ENCODE measurements at regions of chr16 and their contacts with region 1.

Region 1: GRCh38 chr16:20383106-20384029 is 21.2 kb downstream of the PDILT start:
- DNase-seq: peak; percentile 65
- H3K4me3 ChIP-seq: no peak overlapping the region; a peak in 1 of 4 replicates
- H3K27ac ChIP-seq: no peak overlapping the region
- H3K4me1 ChIP-seq: no peaks in the 10 kb centered on the region; a peak in 1 of 4 replicates
- H3K27me3 ChIP-seq: no peaks in the 10 kb centered on the region
- CTCF ChIP-seq: peak; percentile 79
- EP300 ChIP-seq: no peak
- RAD21 ChIP-seq: peak; percentile 72

Region 2: DNA sequence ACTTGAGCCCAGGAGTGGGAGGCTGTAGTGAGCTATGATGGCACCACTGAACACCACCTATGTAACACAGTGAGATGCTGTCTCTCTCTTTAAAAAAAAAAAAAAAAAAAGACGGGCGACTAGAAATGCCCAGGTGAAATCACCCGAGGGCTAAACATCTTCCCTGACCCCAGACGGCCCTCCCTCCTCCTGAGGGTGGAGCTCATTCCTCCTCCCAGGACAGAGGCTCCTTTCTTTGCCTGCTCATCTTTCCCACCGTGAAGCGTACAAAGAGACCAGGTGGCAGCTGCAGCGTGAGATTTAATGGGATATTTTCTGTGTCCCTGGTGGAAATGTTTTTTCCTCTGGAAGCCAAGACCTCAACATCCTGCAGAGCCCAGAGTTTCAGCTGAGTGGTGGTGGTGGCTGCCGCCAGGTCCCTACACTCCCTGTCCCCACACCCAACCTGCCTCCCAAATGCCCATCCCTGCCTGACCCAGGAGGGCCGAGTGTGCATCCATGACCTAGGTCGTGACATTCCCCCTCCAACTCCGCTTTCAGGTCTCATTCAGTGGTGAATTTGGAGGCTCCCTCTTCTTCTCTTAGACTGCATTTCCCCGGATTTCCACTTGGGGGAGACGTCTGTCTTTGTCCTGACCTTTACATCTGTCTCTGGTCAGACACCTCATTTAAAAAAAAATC is 484.3 kb before region 1 on chr16:
- CTCF ChIA-PET with region 1: interaction called, 143 read pairs
- POLR2A ChIA-PET with region 1: no interaction called
- DNase-seq: peak; percentile 64
- H3K4me3 ChIP-seq: no peak overlapping the region; a peak in 1 of 4 replicates
- H3K27ac ChIP-seq: no peak overlapping the region
- H3K4me1 ChIP-seq: no peaks in the 10 kb centered on the region; a peak in 1 of 4 replicates
- H3K27me3 ChIP-seq: no peaks in the 10 kb centered on the region; the same call in 1 of the 2 replicates
- CTCF ChIP-seq: peak; percentile 76
- EP300 ChIP-seq: no peak
- RAD21 ChIP-seq: peak; percentile 80

Region 3: DNA sequence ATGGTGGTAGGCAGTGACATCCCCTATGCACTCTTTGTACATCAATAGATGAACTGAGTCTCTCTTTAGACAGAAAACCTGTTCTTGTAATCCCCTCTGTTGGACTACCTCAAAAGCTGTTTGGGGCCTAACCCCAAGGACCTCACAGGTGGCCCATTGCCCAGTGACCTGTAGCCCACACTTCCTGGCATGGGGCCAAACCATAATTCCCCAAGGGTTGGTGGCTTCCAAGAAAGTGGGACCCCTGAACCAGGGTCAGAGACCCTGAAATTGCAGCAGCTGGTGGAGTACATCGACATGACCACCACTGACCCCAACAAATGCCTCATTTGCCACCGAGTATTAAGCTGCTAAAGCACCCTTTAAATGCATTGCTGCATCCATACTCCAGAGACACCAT is 226.6 kb before region 1 on chr16:
- CTCF ChIA-PET with region 1: no interaction called
- POLR2A ChIA-PET with region 1: no interaction called
- DNase-seq: no peak
- H3K4me3 ChIP-seq: no peak overlapping the region
- H3K27ac ChIP-seq: no peak overlapping the region
- H3K4me1 ChIP-seq: no peaks in the 10 kb centered on the region
- H3K27me3 ChIP-seq: no peaks in the 10 kb centered on the region
- CTCF ChIP-seq: no peak
- EP300 ChIP-seq: no peak
- RAD21 ChIP-seq: no peak

Region 4: DNA sequence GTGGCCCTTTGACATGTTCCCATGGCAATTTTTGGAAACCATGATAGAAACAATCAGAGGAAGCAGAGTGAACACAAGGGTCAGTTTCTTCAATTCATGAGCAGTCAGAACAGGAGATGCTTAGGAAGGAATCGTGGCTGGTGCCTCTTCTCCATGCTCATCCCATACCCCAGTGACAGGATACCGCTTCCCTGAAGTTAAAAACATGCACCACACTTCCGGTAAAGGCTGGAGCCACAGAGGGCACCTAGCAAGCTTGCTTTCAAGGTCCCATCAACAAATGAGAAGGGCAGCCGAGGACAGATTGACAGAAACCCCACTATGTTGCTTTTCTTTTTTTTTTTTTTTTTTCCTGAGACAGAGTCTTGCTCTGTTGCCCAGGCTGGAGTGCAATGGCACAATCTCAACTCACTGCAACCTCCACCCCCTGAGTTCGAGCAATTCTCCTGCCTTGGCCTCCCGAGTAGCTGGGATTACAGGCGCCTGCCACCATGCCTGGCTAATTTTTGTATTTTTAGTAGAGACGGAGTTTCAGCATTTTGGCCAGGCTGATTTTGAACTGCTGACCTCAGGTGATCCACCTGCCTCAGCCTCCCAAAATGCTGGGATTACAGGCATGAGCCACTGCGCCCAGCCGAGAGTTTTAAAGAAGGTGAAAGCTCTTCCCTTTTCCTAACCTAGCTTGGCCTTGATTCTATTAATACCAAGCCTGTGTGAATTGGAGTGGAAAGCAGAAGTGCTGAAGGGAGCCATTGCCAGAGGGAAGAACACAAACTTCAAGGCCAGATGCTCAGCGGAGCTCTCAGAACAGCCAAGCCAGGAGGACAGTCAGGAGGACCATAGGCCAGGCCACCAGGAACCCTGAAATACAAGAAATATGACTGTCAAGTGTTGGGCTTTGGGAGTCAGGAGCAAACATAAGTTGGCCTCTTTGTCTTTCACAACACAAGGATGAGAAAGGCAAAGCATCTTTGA is 72.7 kb before region 1 on chr16:
- CTCF ChIA-PET with region 1: interaction called, 10 read pairs
- POLR2A ChIA-PET with region 1: no interaction called
- DNase-seq: no peak
- H3K4me3 ChIP-seq: no peak overlapping the region
- H3K27ac ChIP-seq: no peak overlapping the region
- H3K4me1 ChIP-seq: no peaks in the 10 kb centered on the region
- H3K27me3 ChIP-seq: no peaks in the 10 kb centered on the region
- CTCF ChIP-seq: no peak
- EP300 ChIP-seq: no peak
- RAD21 ChIP-seq: no peak

Region 5: DNA sequence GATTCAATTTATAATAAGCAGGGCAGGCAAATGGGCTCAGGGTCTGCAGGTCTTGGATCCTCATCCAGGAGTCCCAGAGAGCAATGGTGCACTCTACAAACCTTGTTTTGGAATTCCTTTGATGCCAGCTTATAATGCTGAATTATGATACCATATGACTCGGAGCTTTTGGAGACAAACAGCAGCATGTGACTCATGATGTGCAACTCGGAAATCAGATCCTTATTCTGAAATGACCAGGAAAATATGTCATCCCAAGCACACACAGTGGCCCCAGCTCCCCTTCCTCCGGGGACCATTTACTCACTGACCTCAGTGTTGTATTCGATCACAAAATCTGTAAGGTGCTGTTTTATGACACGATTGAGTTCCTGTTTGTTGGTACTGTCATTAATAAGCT is 10.7 kb before region 1 on chr16:
- CTCF ChIA-PET with region 1: interaction called, 16 read pairs
- POLR2A ChIA-PET with region 1: no interaction called
- DNase-seq: no peak
- H3K4me3 ChIP-seq: no peak overlapping the region
- H3K27ac ChIP-seq: no peak overlapping the region
- H3K4me1 ChIP-seq: no peaks in the 10 kb centered on the region
- H3K27me3 ChIP-seq: no peaks in the 10 kb centered on the region; the same call in 1 of the 2 replicates
- CTCF ChIP-seq: no peak
- EP300 ChIP-seq: no peak
- RAD21 ChIP-seq: no peak

Region 6: DNA sequence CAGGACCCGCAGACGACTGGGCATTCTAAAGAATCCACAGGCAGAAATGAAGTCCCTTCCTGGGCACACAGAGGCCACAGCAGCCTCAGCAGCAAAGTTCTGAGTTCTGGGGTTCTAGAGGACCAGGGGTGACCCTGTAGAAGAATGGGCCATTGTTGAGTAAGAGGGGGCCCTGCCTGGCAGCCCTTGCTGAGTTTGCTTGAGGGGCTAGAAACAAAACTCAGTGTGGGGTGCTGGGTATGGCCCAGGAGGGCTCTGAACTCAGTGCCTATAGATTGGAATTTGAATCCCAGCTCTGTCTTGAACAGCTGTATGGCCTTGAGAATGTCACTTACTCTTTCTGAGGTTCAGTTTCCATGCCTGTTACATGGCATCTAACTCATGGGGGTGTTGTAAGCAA is 21.3 kb after region 1 on chr16 and contains the start of gene PDILT:
- CTCF ChIA-PET with region 1: interaction called, 61 read pairs
- POLR2A ChIA-PET with region 1: no interaction called
- DNase-seq: no peak
- H3K4me3 ChIP-seq: no peak within 1 kb of the TSS
- H3K27ac ChIP-seq: no peak within 1 kb of the TSS
- H3K4me1 ChIP-seq: no peaks in the 10 kb centered on the region
- H3K27me3 ChIP-seq: no peaks in the 10 kb centered on the region
- CTCF ChIP-seq: no peak
- EP300 ChIP-seq: no peak
- RAD21 ChIP-seq: no peak
- polyA plus RNA-seq, gene PDILT: not detected in 2 replicates

Region 7: DNA sequence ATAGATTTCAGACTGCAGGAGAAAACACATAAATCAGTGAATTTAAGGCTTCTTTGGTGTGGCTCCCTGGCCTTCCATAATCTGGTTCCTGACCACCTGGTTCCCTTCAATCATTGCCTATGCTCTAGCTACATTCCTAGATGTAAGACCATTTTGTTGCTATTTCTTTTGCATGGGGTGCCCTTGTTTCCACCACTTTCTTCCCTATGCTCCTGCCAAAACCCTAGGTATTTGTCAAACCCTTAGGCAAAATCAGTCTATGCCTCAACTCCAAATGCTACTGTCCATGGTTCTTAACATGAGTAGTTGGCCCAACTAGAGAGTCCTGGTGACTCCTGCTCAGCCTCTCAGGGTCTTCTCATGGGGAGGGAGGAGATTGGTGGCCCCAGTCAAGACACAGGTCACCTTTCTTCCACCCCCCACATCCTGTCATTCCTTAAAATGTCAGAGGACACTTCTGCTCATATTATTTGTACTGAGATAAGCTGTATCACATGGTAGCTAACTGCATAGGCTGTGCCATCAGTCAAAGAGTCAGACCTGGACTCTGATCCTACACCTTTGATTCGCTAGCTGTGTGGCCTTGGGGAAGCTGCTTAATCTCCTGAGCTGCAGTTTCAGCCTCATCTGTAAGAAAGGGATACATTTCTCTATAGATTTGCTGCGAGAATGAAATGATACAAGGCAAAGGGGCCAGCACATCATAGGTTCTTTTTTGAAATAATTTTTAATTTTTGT is 40.9 kb after region 1 on chr16:
- CTCF ChIA-PET with region 1: no interaction called
- POLR2A ChIA-PET with region 1: no interaction called
- DNase-seq: no peak
- H3K4me3 ChIP-seq: no peak overlapping the region
- H3K27ac ChIP-seq: no peak overlapping the region
- H3K4me1 ChIP-seq: no peaks in the 10 kb centered on the region
- H3K27me3 ChIP-seq: no peaks in the 10 kb centered on the region
- CTCF ChIP-seq: no peak
- EP300 ChIP-seq: no peak
- RAD21 ChIP-seq: no peak

Measured in SK-N-SH (cell line).